HCT116 (cell line): ENCODE measurements at regions of chr10 and their contacts with region 1.

Region 1: DNA sequence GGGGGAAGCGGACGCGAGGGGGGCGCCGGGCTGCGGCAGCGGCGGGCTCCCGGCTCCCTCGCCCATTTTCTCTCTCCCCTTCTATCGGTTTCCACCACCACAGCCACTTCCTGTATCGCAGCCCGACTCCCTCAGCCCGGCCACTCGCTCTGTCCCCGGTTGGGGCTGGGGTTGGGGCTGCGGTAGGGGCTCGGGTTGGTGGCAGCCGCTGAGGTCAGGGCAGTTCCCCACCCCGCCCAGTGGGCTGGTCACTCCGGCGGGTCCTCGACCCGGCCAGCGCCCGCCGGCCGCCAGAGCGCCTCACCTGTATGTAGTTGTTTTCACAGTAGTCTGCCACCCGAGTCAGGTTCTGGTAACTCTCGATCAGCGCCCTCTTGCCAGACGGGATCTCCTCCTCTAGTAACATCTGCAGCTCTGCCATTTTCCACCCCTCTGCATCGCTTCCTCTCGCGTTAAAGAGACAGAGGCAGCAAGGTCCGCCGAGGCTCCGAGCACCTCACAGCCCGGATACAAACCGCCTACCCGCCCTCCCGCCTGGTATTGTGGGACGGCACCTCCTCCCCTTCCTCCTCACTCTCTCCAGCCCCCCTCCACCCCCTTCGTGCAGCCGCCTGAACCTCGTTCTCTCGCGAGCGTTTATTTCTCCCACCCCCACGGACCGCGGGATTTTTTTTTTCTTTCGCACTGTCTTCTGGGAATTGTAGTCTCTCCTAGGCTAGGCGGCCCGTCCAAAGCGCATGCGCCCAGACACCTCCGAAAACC is at the start of gene ABI1:
- DNase-seq: peak; percentile 97
- ATAC-seq: peak; percentile 93
- H3K4me3 ChIP-seq: peak within 1 kb of the TSS; percentile 83 to 95
- H3K27ac ChIP-seq: peak within 1 kb of the TSS; percentile 82
- H3K4me1 ChIP-seq: peaks cover 0 to 25% of the 10 kb centered on the region in 2 experiments; a peak in 2 of 4 replicates
- H3K27me3 ChIP-seq: no peaks in the 10 kb centered on the region
- CTCF ChIP-seq: no peak
- POLR2A ChIP-seq: peak; percentile 93
- RAD21 ChIP-seq: no peak
- total RNA-seq, gene ABI1: 34.8 TPM

Region 2: GRCh38 chr10:26697163-26697921 is 163.3 kb before region 1 on chr10 and contains the start of gene PDSS1:
- CTCF ChIA-PET with region 1: no interaction called
- POLR2A ChIA-PET with region 1: no interaction called
- RAD21 ChIA-PET with region 1: no interaction called
- intact Hi-C with region 1: loop called (anchors 10 kb)
- DNase-seq: peak; percentile 28
- ATAC-seq: peak; percentile 89
- H3K4me3 ChIP-seq: peak within 1 kb of the TSS; percentile 76 to 95
- H3K27ac ChIP-seq: peak within 1 kb of the TSS; percentile 94
- H3K4me1 ChIP-seq: peaks cover 5 to 18% of the 10 kb centered on the region in 2 experiments; a peak in 3 of 4 replicates
- H3K27me3 ChIP-seq: no peaks in the 10 kb centered on the region
- CTCF ChIP-seq: no peak
- POLR2A ChIP-seq: no peak
- RAD21 ChIP-seq: no peak
- total RNA-seq, gene PDSS1: 23.5 TPM

Region 3: DNA sequence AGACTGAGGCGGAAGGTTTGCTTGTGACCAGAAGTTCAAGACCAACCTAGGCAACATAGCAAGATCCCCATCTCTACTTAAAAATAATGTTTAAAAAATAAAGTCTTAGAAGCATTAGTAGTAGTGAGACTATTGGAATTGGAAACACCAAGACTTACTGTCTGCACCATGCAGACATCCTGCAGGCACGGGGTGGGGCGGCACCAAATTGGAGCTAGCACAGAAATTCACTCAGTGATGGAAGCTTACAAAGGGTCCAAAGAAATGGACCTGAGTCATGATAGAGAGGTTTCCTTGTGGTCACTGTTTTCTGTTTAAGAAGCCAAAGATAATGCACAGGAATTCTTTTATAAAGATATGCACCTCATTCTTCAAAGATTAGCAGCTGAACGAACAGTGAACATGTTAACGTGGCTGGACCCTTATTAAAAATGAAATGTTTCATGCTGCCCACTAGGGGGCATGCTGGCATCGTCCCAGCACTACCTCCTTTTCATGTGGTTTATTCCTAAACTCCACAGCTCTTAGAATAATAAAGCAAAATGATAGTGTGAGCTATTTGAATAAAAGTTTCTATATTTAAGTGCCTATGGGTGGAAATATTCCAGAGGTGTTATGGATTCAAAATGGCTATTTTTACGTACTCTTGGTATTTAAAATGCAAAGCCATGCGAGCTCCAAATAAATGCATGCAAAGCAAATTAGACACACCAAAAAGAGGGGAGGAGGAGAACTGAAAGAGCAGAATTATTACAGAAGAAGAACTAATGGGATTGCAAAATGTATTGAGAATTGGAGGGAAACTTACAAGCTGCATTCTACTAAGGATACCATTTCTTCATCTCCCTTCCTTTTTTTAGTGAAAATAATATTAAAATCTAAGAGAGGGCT is 134.5 kb before region 1 on chr10:
- CTCF ChIA-PET with region 1: interaction called, 13 read pairs
- POLR2A ChIA-PET with region 1: no interaction called
- RAD21 ChIA-PET with region 1: no interaction called
- intact Hi-C with region 1: no loop called
- DNase-seq: peak; percentile 13
- ATAC-seq: peak; percentile 69
- H3K4me3 ChIP-seq: no peak overlapping the region
- H3K27ac ChIP-seq: no peak overlapping the region
- H3K4me1 ChIP-seq: peaks cover 0 to 3% of the 10 kb centered on the region in 2 experiments; a peak in 1 of 4 replicates
- H3K27me3 ChIP-seq: no peaks in the 10 kb centered on the region
- CTCF ChIP-seq: peak; percentile 70 to 91 (median 72)
- POLR2A ChIP-seq: no peak
- RAD21 ChIP-seq: peak; percentile 88